Heart right ventricle (tissue), 16 donors: ENCODE measurements at regions of chr21 and their contacts with region 1.

Region 1: GRCh38 chr21:32359711-32360260 is 33.0 kb downstream of the URB1 start:
- DNase-seq: no peak
- ATAC-seq: peak in 1 of 8 donors; percentile 12
- H3K4me3 ChIP-seq: no peak overlapping the region
- H3K27ac ChIP-seq: peak overlapping the region in 1 of 10 donors; percentile 25
- H3K4me1 ChIP-seq: peaks cover 0 to 32% (median 10%) of the 10 kb centered on the region in 9 donors
- H3K27me3 ChIP-seq: no peaks in the 10 kb centered on the region
- CTCF ChIP-seq: peak in 4 of 9 donors; percentile 23 to 38 (median 24)

Region 2: DNA sequence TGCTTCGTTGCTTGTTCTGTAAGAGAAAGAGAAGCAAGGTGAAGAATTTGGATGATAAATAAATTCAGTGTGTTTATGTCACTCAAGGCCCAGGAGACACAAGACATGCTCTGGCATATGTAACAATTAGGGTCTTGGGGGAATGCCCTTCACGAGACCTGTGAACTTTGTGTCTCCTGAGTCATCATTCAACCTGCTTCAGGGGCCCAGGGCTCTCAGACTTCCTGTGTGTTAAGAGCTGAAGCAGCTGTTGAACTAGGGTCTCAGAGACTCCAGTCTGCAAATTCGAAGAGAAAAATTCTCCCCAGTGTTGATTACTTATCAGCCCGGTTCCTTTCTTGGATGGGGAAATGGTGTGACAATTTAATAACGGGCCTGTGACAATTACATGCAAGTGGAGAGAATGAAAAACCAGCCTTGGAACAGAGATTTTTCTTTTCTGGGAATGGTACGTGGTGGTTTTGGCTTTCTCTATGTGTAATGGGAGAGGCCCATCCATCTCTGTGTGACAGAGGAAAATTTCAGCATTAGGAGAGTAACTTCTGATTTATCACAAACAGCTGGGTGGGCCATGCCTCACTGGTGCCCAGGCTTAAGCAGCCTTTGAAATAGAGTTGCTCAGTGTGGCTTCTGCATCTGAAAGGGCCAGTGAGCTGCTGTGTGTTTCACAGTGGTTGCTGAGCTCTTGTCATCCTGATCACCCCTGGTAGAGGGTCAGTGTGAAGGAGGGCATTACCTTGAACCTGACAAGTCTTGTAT is 464.5 kb before region 1 on chr21:
- intact Hi-C with region 1: no loop called
- DNase-seq: no peak
- ATAC-seq: no peak
- H3K4me3 ChIP-seq: no peak overlapping the region
- H3K27ac ChIP-seq: no peak overlapping the region
- H3K4me1 ChIP-seq: no peaks in the 10 kb centered on the region
- H3K27me3 ChIP-seq: peaks cover 0 to 5% (median 0%) of the 10 kb centered on the region in 7 donors
- CTCF ChIP-seq: no peak

Region 3: GRCh38 chr21:32312326-32312725 is 47.5 kb before region 1 on chr21:
- intact Hi-C with region 1: loop called in 1 of 10 experiments (anchors 5 kb)
- DNase-seq: peak in 1 of 2 donors; percentile 61
- ATAC-seq: peak in 6 of 8 donors; percentile 42 to 83 (median 58)
- H3K4me3 ChIP-seq: no peak overlapping the region
- H3K27ac ChIP-seq: peak overlapping the region in 2 of 10 donors; percentile 24 to 40
- H3K4me1 ChIP-seq: peaks cover 0 to 18% (median 7%) of the 10 kb centered on the region in 9 donors
- H3K27me3 ChIP-seq: no peaks in the 10 kb centered on the region
- CTCF ChIP-seq: no peak

Region 4: DNA sequence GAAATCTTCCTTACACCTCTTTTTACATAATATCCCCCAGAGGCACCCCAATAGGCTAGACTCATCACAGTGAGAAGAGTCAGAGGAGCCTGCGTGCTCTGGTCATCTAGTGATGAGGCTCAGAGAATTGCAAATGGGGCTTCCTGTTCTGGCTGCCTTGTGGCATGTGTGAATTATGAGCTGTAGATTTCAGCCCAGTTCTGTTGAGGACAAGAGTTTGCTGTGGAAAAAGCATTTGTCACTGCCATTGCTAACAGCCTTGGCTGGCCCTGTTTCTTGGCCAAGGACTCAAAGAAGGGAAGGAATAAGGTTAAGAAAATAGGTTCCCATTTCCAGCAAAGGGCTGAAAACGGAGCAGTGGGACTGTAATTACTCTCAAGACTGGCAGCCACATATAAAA is 30.5 kb before region 1 on chr21:
- intact Hi-C with region 1: loop called in 1 of 10 experiments (anchors 5 kb)
- DNase-seq: no peak
- ATAC-seq: peak in 6 of 8 donors; percentile 12 to 36 (median 22)
- H3K4me3 ChIP-seq: no peak overlapping the region
- H3K27ac ChIP-seq: peak overlapping the region; percentile 43 to 90 (median 74)
- H3K4me1 ChIP-seq: peaks cover 5 to 60% (median 24%) of the 10 kb centered on the region in 9 donors
- H3K27me3 ChIP-seq: no peaks in the 10 kb centered on the region
- CTCF ChIP-seq: no peak

Region 5: GRCh38 chr21:32442566-32443318 is 83.0 kb after region 1 on chr21:
- intact Hi-C with region 1: no loop called
- DNase-seq: no peak
- ATAC-seq: peak in 4 of 8 donors; percentile 10 to 36 (median 18)
- H3K4me3 ChIP-seq: no peak overlapping the region
- H3K27ac ChIP-seq: peak overlapping the region in 3 of 10 donors; percentile 49 to 56 (median 52)
- H3K4me1 ChIP-seq: peaks cover 0 to 27% (median 7%) of the 10 kb centered on the region in 9 donors
- H3K27me3 ChIP-seq: no peaks in the 10 kb centered on the region
- CTCF ChIP-seq: no peak